BJ (cell line): ENCODE measurements at regions of chr2 and their contacts with region 1.

Region 1: DNA sequence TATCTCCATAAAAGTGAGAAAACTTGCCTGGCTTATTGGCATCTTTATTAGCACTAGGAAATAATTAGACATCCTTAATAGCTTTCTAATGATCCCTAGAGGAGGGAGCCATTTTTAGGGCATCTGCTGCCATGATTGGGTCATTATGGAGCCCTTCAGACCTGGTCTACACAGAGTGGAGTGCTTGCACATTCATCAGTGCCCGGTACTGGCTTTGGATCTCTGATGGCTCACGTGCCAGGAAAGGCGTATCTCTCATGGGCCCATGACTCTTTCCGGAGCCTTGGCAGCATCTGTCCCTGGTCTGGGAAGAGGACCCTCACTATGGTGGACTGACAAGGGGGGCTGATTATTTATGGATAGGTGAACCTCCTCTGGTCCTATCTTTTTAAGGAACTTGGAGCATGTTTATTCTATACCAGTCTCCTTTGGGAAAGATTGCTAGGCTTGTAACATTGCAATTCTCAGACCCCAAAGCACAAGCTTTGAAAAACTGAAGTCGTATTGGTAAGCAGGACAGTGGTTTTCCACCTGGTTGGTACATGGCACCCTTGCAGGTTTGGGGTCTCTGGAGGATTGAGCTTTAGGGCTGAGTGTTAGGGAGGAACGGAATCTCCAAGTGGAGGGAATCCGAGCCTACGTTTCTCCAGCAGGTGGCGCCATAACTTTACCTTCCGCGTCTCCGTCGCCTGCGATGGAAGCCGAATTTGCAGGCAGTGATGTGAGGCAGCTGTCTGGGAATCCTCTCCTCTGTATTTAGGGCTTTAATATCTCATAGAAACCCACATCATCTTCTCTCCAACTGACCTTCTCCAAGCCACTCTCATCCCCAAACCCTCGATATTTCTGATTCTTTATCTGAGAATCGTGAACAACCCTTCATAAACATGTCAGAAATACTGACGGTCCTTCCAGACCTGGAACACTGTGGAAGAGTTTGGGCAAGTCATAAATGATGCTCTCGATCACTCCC is 27.8 kb downstream of the SIX2 start:
- DNase-seq: no peak
- H3K4me3 ChIP-seq: no peak overlapping the region
- H3K27me3 ChIP-seq: peaks cover 7% of the 10 kb centered on the region; the same call in 1 of the 2 replicates
- CTCF ChIP-seq: peak; percentile 83

Region 2: GRCh38 chr2:45329045-45329677 is 347.7 kb after region 1 on chr2:
- CTCF ChIA-PET with region 1: no interaction called
- POLR2A ChIA-PET with region 1: no interaction called
- DNase-seq: no peak
- H3K4me3 ChIP-seq: no peak overlapping the region
- H3K27me3 ChIP-seq: peaks cover 2% of the 10 kb centered on the region; the same call in 1 of the 2 replicates
- CTCF ChIP-seq: 0 out of 2 replicates have a peak, but pooled peaks have one; percentile 6

Region 3: GRCh38 chr2:45494269-45494977 is 513.0 kb after region 1 on chr2:
- CTCF ChIA-PET with region 1: interaction called, 182 read pairs
- POLR2A ChIA-PET with region 1: no interaction called
- DNase-seq: no peak
- H3K4me3 ChIP-seq: no peak overlapping the region
- H3K27me3 ChIP-seq: no peaks in the 10 kb centered on the region
- CTCF ChIP-seq: peak; percentile 67